Caco-2 (cell line): ENCODE measurements at regions of chr16 and their contacts with region 1.

Region 1: DNA sequence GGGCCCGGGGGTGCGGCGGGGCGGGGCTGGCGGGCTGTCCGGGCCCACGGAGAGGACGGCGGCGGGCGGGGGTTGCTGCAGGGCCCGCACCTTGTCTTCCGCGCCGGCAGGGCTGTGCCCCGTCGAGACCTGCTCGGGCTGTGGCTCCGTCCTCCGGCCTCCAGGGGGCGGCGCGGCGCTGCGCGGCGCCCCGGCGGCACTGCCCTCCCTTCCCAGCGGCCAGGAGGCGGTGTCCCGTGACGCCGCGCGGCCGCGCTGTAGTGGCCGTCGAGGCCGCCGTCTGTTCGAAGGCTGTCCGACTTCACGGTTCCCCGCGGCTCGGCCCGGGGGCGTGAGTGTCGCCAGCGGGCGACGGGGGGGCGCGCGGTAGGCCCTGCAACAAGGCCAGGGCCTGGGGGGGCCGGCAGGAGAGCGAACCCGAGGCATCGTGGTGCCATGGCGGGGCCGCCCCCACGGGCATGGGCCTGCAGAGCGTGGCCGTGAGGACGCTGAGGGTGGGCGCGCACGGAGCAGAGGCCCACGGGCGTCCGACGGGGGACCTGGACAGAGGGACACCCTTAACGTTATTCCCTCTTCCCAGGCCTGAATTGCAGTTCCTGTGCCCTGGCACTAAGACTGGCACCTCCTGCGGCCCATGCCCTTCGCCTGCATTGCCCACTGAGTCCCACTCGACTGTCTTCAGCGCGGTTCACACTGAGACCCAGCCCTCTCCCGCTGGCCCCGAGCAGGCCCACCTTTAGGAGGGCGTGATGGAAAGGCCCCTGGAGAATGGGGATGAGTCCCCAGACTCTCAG is at the start of gene PLEKHG4:
- DNase-seq: peak; percentile 85 to 93
- H3K4me3 ChIP-seq: peak within 1 kb of the TSS; percentile 88
- H3K4me3 Mint-ChIP-seq: peak within 1 kb of the TSS; percentile 84
- H3K27ac Mint-ChIP-seq: peak within 1 kb of the TSS; percentile 66
- H3K4me1 ChIP-seq: peaks cover 20% of the 10 kb centered on the region
- H3K4me1 Mint-ChIP-seq: peaks cover 7% of the 10 kb centered on the region
- H3K27me3 ChIP-seq: no peaks in the 10 kb centered on the region
- H3K27me3 Mint-ChIP-seq: no peaks in the 10 kb centered on the region
- CTCF ChIP-seq: peak; percentile 63 to 94
- total RNA-seq, gene PLEKHG4: 91.0 and 96.4 TPM in 2 replicates

Region 2: DNA sequence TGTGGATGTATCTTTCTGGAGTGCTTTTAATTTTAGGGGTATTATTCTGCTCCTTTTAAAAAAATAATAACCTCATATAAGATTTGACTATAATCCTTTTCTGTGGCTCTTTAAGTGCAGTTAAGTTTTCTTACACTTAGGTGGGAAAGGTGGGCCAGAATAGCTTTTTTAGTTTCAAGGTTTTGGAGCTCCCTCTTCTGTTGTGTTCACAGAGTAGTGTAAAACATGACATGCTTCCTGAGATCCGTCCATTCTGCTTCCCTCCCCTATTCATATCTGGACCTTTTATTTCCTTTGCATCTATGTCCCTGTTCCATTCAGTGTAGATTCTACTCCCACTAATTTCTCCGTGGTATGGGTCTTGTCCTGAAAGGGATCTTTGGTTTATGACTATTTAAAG is 60.0 kb after region 1 on chr16:
- CTCF ChIA-PET with region 1: interaction called, 9 read pairs
- POLR2A ChIA-PET with region 1: no interaction called
- intact Hi-C with region 1: loop called (anchors 2 kb)
- DNase-seq: peak in 1 of 2 experiments; percentile 38
- H3K4me3 ChIP-seq: no peak overlapping the region
- H3K4me3 Mint-ChIP-seq: no peak overlapping the region
- H3K27ac Mint-ChIP-seq: no peak overlapping the region
- H3K4me1 ChIP-seq: no peaks in the 10 kb centered on the region
- H3K4me1 Mint-ChIP-seq: no peaks in the 10 kb centered on the region
- H3K27me3 ChIP-seq: no peaks in the 10 kb centered on the region
- H3K27me3 Mint-ChIP-seq: no peaks in the 10 kb centered on the region
- CTCF ChIP-seq: peak; percentile 30 to 58

Region 3: DNA sequence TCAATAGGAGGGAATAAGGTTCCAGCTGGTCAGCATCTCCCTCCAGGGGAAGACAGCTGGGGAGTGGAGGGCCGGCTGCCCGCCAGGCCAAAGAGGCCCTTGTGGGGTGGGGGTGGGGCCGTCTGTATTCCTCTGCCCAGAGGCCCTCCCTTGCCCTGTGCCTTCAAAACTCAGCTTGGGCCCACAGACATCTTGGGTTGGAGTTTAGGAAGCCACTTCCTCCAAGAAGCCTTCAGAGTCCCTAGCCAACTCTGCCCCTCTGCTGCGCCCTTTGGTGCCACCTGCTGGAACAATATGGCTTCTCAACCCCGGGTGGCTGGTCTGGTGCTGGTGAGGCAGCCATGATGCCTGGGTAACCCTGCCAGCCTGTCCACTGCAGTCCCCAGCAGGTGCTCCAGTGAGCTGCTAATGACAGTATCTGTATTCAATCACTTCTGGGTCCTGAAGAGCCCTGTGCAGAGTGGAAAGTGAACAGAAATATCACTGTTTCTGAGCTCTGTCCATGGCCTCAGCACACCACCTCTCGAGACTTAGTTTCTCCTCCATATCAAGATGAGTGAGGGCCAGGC is 168.1 kb after region 1 on chr16:
- CTCF ChIA-PET with region 1: no interaction called
- POLR2A ChIA-PET with region 1: no interaction called
- intact Hi-C with region 1: loop called (anchors 5 kb)
- DNase-seq: peak; percentile 70 to 74
- H3K4me3 ChIP-seq: no peak overlapping the region
- H3K4me3 Mint-ChIP-seq: no peak overlapping the region
- H3K27ac Mint-ChIP-seq: no peak overlapping the region
- H3K4me1 ChIP-seq: no peaks in the 10 kb centered on the region
- H3K4me1 Mint-ChIP-seq: no peaks in the 10 kb centered on the region
- H3K27me3 ChIP-seq: no peaks in the 10 kb centered on the region
- H3K27me3 Mint-ChIP-seq: no peaks in the 10 kb centered on the region
- CTCF ChIP-seq: peak; percentile 64 to 69

Region 4: GRCh38 chr16:67595033-67595355 is 315.5 kb after region 1 on chr16:
- CTCF ChIA-PET with region 1: no interaction called
- POLR2A ChIA-PET with region 1: no interaction called
- intact Hi-C with region 1: no loop called
- DNase-seq: no peak
- H3K4me3 ChIP-seq: no peak overlapping the region
- H3K4me3 Mint-ChIP-seq: no peak overlapping the region
- H3K27ac Mint-ChIP-seq: no peak overlapping the region
- H3K4me1 ChIP-seq: peaks cover 4% of the 10 kb centered on the region; the same call in 1 of the 2 replicates
- H3K4me1 Mint-ChIP-seq: peaks cover 8% of the 10 kb centered on the region
- H3K27me3 ChIP-seq: no peaks in the 10 kb centered on the region
- H3K27me3 Mint-ChIP-seq: no peaks in the 10 kb centered on the region
- CTCF ChIP-seq: no peak